Sigmoid colon (tissue), 7 donors: ENCODE measurements at regions of chrX and their contacts with region 1.

Region 1: DNA sequence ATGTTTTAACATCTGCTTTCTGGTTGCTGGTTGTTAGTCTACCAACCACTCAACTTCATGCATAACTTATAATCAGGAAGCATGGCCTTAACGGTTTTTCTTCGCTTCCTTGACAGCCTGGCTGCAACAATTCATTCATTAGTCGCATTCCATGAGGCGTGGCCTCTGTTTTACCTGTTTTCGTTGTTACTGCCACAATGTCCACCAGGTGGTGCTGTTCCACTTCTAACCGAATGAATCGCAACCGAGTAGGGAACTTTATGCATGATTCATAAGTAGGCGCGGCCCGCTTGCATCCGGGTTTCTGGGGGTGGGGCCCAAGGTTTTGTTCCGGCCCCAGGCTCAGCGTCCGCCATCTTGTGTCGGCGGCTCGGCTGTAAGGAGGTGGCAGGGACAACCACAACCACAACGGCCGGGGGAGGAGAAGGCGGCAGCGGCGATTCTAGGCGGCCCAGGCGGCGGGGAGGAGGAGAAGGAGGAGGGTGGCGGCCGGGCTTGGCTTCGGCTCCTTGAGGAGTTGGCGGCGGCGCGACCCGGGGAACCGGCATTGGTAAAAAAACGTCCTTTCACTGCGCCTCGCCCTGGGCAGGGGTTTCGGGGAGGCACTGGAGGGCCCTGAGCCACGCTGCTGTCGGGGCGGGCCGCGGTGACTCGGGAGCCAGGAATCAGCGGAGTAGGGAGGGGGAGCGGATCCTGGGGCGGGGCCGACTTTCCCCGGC is at the start of gene UBA1:
- DNase-seq: peak; percentile 98
- H3K4me3 ChIP-seq: peak within 1 kb of the TSS; percentile 70 to 99 (median 82)
- H3K27ac ChIP-seq: peak within 1 kb of the TSS; percentile 95 to 98 (median 96)
- H3K4me1 ChIP-seq: peaks cover 0 to 56% (median 43%) of the 10 kb centered on the region in 4 donors
- H3K27me3 ChIP-seq: no peaks in the 10 kb centered on the region
- CTCF ChIP-seq: peak; percentile 48 to 90 (median 77)
- EP300 ChIP-seq: no peak
- POLR2A ChIP-seq: peak; percentile 58 to 60
- total RNA-seq, gene UBA1: 74.9 to 112 (median 80.7) TPM

Region 2: GRCh38 chrX:47125102-47125501 is 68.5 kb before region 1 on chrX:
- intact Hi-C with region 1: no loop called
- DNase-seq: peak; percentile 24
- H3K4me3 ChIP-seq: no peak overlapping the region
- H3K27ac ChIP-seq: no peak overlapping the region
- H3K4me1 ChIP-seq: no peaks in the 10 kb centered on the region
- H3K27me3 ChIP-seq: no peaks in the 10 kb centered on the region
- CTCF ChIP-seq: no peak
- EP300 ChIP-seq: no peak
- POLR2A ChIP-seq: no peak

Region 3: DNA sequence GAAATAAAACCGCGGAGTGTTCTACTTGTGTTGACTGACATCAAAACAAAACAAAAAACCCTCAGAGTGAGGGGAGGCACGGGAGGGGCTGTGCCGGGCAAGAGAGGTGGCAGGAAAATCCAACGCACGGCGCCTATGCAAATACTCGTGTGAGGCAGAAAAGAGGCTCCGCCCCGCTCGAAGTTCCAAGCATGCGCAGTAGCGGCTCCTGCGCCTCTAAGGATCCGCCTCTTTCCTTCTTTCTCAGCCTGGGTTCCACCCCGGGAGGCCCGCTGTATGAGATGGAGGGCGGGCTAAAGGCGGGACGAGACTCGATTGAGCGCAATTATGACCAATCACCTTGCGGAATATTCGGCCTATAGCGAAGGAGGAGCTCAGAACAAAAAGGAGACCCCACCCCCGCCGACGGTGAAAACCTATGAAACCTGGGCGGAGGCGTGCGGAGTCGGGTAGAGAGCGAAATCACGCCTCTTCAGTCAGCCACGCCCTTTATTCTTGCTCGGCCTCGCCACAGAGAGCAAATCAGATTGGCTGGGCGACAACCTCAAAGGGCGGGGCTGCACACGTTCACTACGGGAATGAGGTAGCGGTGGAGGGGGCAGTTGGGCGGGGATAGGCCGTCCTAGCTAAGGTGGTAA is 24.1 kb after region 1 on chrX:
- intact Hi-C with region 1: loop called (anchors 1 kb)
- DNase-seq: peak; percentile 99
- H3K4me3 ChIP-seq: peak overlapping the region; percentile 42 to 97 (median 86)
- H3K27ac ChIP-seq: peak overlapping the region; percentile 96 to 99 (median 98)
- H3K4me1 ChIP-seq: peaks cover 0 to 42% (median 21%) of the 10 kb centered on the region in 4 donors
- H3K27me3 ChIP-seq: no peaks in the 10 kb centered on the region
- CTCF ChIP-seq: no peak
- EP300 ChIP-seq: no peak
- POLR2A ChIP-seq: peak in 1 of 2 donors; percentile 13

Region 4: DNA sequence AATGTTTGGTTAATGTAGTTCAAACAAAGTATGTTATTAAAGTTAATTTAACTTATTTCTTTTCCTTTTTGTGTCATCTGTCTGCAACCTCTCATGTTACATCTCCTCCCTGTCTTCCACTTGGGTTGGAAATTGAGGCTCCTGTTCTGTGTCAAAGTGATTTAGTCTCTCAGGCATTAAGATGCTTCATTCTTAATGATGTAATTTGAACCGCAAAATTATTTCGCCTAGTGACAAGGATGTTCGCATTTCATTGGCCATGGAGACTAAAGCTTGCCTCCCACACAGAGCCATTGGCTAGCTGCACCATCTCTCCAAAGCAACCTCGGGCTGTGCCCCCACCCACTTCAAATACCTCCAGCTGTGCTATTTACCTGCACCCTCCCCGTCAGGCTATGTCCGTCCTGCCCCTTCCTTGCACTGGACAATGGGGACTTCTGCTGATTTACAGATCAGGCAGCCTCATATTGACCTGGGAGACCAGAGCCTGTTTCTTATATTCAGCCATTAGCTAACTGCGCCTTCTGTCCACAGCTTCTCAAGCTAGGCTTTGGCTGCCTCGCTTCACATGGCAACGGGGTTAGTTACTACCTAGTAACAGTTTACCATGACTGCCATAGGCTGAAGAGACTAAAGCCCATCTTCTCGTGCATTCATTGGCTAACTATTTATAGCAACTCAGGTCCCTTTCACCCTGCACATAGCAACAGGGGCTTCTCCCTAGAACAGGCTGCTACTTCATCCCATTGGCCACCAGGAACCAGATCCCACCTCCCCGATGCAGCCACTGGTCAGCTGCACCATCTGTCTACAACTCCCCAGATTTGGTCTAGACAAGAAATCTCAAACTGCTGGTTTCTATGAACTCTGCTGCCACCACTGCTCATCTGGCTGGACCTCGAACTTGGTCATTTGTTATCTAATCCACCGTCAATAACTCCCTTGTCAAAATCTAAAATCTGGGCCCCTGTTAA is 168.2 kb after region 1 on chrX:
- intact Hi-C with region 1: loop called (anchors 5 kb)
- DNase-seq: peak; percentile 92
- H3K4me3 ChIP-seq: peak overlapping the region; percentile 7 to 44 (median 38)
- H3K27ac ChIP-seq: peak overlapping the region; percentile 69 to 85 (median 80)
- H3K4me1 ChIP-seq: no peaks in the 10 kb centered on the region
- H3K27me3 ChIP-seq: no peaks in the 10 kb centered on the region
- CTCF ChIP-seq: no peak
- EP300 ChIP-seq: no peak
- POLR2A ChIP-seq: no peak

Region 5: DNA sequence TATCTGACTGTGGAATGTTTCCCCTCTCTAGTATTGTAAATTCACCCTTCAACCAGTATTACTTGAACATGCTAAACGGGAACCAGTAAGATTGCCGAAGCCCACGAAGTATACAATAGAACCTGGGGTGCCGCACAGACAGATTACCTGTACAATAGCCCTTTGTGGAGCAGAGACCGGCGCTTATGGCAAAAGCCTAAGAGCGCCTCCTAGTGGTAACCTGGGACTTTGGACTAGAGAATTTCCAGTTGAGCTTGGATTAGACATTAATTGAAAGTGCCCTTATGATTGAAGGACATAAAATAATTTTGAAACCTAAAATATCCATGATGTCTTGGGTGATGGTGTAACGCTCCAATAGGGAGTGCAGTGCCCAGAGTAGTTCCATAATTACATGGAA is 190.9 kb after region 1 on chrX:
- intact Hi-C with region 1: loop called (anchors 2 kb)
- DNase-seq: peak; percentile 80
- H3K4me3 ChIP-seq: no peak overlapping the region
- H3K27ac ChIP-seq: no peak overlapping the region
- H3K4me1 ChIP-seq: no peaks in the 10 kb centered on the region
- H3K27me3 ChIP-seq: no peaks in the 10 kb centered on the region
- CTCF ChIP-seq: peak; percentile 6 to 64 (median 46)
- EP300 ChIP-seq: no peak
- POLR2A ChIP-seq: no peak

Region 6: GRCh38 chrX:47523297-47523696 is 329.7 kb after region 1 on chrX:
- intact Hi-C with region 1: loop called (anchors 1 kb)
- DNase-seq: peak; percentile 90
- H3K4me3 ChIP-seq: peak overlapping the region; percentile 29 to 60 (median 52)
- H3K27ac ChIP-seq: peak overlapping the region in 2 of 4 donors; percentile 19 to 42
- H3K4me1 ChIP-seq: peaks cover 0 to 6% (median 0%) of the 10 kb centered on the region in 4 donors
- H3K27me3 ChIP-seq: no peaks in the 10 kb centered on the region
- CTCF ChIP-seq: peak; percentile 42 to 67 (median 63)
- EP300 ChIP-seq: no peak
- POLR2A ChIP-seq: no peak